ENCODE measurements at regions of chr2 and their contacts with region 1.

Region 1: GRCh38 chr2:227661019-227661649 is 5.5 kb upstream of the SCYGR5 start:
- DNase-seq: no peak
- CTCF ChIP-seq: no peak

Region 2: DNA sequence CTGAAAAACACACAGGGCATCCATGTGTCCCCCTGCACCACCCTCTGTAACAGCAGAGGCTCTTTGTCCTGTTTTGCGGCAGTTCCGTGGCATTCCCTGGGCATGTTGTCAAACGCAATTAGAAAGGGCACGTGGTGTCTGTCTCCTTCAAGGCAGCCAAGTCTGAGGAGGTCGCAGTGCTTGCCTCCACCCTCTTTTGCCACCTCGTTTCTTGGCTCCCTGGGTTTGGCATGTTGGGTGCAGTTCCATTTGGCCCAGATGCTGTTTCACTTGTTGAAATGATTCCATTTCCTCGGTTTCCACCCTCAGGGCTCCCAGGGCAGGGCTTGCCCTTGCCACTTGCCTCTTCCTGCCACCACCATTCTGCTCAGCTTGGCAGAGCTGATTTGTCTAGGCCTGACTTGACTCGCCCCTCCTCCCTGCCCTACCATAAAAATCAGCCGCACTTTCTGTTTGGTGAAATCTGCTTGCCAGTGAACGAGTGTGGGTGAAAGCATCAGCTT is 164.9 kb after region 1 on chr2:
- in situ Hi-C with region 1: no loop called
- DNase-seq: no peak
- CTCF ChIP-seq: no peak

Region 3: GRCh38 chr2:227862227-227862740 is 201.2 kb after region 1 on chr2:
- in situ Hi-C with region 1: loop called (anchors 10 kb)
- DNase-seq: peak; percentile 65
- CTCF ChIP-seq: peak; percentile 75

Region 4: DNA sequence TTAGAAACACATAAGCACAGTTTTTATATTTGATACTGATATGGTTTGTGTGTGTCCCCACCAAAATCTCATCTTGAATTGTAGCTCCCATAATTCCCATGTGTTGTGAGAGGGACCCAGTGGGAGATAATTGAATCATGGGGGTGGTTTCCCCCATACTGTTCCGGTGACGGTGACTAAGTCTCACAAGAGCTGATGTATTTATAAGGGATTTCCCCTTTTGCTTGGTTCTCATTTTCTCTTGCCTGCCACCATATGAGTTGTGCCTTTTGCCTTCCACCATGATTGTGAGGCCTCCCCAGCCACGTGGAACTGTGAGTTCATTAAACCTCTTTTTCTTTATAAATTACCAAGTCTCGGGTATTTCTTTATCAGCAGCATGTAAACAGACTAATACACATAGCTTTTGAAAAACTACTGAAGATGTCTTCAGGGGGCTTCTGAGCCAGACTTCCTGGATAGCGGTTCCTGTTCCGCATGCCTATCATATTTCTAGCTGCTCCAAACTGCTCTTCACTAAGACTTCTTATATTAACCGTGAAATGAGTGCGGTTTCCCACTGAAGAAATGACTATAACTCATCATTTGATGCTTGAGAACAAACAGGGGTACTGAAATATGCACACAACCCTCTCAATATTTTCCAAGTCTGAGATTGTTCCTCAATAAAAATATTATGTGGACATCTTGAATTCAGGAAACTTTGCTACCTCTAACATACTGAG is 444.6 kb after region 1 on chr2:
- in situ Hi-C with region 1: no loop called
- DNase-seq: no peak
- CTCF ChIP-seq: no peak

Measured in GM13976 (cell line).